ENCODE measurements at regions of chr12 and their contacts with region 1.

Region 1: DNA sequence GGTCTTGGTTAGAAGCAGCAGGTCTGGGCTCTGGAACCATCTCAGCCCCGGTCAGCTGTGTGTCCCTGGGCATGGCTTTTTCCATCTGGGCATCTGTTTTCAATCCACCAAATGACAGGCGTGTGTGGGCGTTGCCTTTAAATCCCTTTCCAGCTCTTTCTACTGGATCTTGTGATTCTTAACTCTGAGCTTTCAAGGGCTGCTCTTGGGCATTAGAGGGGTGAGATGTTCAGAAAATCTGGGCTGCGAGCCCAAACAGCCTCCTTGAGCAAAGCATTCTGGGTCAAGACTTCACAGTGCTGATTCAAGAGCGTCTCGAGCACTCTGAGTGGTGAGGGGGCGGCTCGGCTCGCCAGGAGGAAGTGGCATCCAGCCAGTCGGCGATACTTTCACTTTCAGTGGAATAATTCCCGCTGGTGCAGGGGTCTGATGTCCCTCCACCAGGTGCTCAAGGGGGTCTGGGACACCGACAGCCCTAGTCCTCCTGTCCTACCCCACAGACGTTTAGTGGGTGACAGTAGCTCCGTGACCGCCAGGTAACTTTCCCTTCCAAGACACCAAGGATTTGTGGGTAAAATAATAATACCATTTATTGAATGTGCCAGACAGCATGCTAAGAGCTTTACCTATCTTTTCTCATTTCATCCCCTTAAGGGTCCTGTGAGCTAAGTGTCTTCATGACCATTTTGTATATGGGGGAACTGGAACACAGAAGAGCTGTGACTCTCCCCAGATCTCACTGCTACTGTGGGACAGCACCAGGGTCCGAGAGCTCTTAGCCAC is 114.0 kb downstream of the PLXNC1 start:
- DNase-seq: peak; percentile 81 to 92 (median 91)
- H3K4me3 ChIP-seq: peak overlapping the region in 6 of 7 experiments; percentile 32 to 82 (median 65)
- H3K27ac ChIP-seq: peak overlapping the region; percentile 13 to 58
- H3K4me1 ChIP-seq: peaks cover 14 to 55% (median 39%) of the 10 kb centered on the region in 4 experiments
- H3K27me3 ChIP-seq: no peaks in the 10 kb centered on the region

Region 2: DNA sequence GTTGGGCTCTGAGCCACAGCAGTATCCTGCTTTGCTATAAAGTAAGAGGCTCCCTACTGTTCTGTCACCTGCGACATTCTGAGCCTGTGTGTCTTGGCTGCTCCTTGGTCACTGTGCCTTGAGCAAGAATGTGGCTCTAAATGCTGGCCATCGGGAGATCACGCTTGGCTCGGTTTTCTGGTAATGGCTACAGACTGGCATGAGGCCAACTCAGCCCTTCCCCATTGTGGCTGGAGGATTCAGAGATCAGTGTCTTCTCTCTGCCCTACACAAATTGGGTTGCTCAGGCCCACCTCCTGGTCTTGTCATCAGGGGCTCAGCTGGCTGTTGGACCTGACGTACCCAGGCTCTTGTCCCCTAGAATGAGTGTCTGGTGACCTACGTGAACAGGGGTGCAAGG is 19.5 kb before region 1 on chr12:
- CTCF ChIA-PET with region 1: interaction called, 13 read pairs
- POLR2A ChIA-PET with region 1: no interaction called
- DNase-seq: no peak
- H3K4me3 ChIP-seq: no peak overlapping the region
- H3K27ac ChIP-seq: no peak overlapping the region
- H3K4me1 ChIP-seq: peaks cover 29 to 85% (median 52%) of the 10 kb centered on the region in 4 experiments
- H3K27me3 ChIP-seq: no peaks in the 10 kb centered on the region

Measured in common myeloid progenitor, CD34-positive (primary cell).